ENCODE measurements at regions of chr2 and their contacts with region 1.

Region 1: DNA sequence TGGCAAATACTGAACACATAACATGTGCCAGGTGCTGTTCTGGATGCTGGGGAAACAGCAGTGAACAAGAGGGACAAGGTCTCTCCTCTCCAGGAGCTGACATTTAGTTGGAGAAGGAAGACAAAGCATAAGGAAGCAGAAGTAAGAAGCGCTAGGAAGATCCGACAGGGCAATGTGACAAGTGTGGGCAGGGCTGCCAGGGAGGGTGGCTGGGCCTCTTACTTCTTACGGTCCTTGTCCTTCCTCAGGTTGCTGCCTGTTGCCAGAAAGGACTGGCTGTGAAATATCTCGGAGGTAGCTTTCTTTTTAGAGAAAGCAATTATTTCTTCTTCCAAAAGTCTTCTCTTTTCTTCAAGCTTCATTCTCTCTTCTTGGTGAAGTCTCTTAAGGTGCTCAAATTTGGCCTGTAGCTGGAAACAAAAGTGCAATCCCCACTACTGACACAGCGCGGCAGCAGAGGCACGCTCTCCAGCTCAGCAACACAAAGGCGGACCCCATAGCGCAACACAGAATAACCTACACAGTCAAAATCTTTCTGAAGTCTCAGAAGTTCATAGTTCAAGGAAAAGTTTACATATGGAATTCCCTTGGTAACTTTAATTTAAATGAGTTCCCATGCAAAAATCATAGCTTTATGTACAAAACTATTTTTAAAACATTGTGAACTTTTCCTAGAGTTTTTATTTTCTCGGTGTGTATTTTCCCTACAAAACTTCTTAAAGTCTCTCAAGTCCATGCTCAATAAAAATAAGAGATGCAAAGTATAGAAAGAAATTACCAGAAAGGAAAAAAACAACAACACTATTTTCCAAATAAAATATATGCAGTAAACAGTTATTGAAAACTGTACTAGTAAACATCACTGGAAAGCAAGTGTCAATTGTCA is 67.7 kb downstream of the SEPTIN10 start:
- DNase-seq: peak; percentile 56 to 78 (median 66)
- ATAC-seq: peak; percentile 81
- H3K4me3 ChIP-seq: no peak overlapping the region
- H3K27ac ChIP-seq: no peak overlapping the region
- H3K4me1 ChIP-seq: no peaks in the 10 kb centered on the region
- H3K27me3 ChIP-seq: no peaks in the 10 kb centered on the region
- CTCF ChIP-seq: peak; percentile 73 to 96 (median 93)
- POLR2A ChIP-seq: no peak

Region 2: GRCh38 chr2:109457794-109458193 is 88.3 kb before region 1 on chr2:
- intact Hi-C with region 1: no loop called
- DNase-seq: no peak
- ATAC-seq: no peak
- H3K4me3 ChIP-seq: no peak overlapping the region
- H3K27ac ChIP-seq: no peak overlapping the region
- H3K4me1 ChIP-seq: no peaks in the 10 kb centered on the region
- H3K27me3 ChIP-seq: no peaks in the 10 kb centered on the region
- CTCF ChIP-seq: no peak
- POLR2A ChIP-seq: no peak

Region 3: GRCh38 chr2:109637749-109638570 is 91.9 kb after region 1 on chr2:
- intact Hi-C with region 1: no loop called
- DNase-seq: no peak
- ATAC-seq: no peak
- H3K4me3 ChIP-seq: no peak overlapping the region
- H3K27ac ChIP-seq: no peak overlapping the region
- H3K4me1 ChIP-seq: peaks cover under 1% of the 10 kb centered on the region
- H3K27me3 ChIP-seq: no peaks in the 10 kb centered on the region
- CTCF ChIP-seq: no peak
- POLR2A ChIP-seq: no peak

Region 4: DNA sequence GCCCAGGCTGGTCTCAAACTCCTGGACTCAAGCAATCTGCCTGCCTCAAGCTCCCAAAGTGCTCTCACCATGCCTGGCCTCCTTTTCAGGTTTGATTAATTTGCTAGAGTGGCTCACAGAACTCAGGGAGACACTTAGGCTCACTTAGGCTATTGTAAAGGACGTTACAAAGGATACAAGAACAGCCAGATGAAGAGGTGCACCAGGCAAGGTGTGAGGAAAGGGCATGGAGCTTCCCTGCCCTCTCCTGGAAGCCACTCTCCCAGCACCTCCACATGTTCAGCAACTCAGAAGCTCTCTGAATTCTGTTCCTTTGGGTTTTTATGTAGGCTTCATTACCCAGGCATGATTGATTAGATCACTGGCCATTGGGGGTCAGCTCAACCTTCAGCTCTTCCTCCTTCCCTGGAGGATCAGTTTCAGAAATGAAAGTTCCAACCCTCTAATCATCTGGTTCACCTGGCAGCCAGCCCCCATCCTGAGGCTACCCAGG is 169.3 kb after region 1 on chr2:
- intact Hi-C with region 1: loop called (anchors 10 kb)
- DNase-seq: peak; percentile 40 to 58 (median 48)
- ATAC-seq: peak; percentile 83
- H3K4me3 ChIP-seq: no peak overlapping the region
- H3K27ac ChIP-seq: no peak overlapping the region
- H3K4me1 ChIP-seq: no peaks in the 10 kb centered on the region
- H3K27me3 ChIP-seq: no peaks in the 10 kb centered on the region
- CTCF ChIP-seq: peak; percentile 38 to 70 (median 60)
- POLR2A ChIP-seq: no peak

Region 5: GRCh38 chr2:109736177-109736827 is 190.2 kb after region 1 on chr2:
- intact Hi-C with region 1: loop called (anchors 5 kb)
- DNase-seq: peak; percentile 59 to 72 (median 66)
- ATAC-seq: peak; percentile 63
- H3K4me3 ChIP-seq: no peak overlapping the region
- H3K27ac ChIP-seq: no peak overlapping the region
- H3K4me1 ChIP-seq: no peaks in the 10 kb centered on the region
- H3K27me3 ChIP-seq: no peaks in the 10 kb centered on the region
- CTCF ChIP-seq: peak; percentile 48 to 77 (median 68)
- POLR2A ChIP-seq: no peak